ENCODE measurements at regions of chr19 and their contacts with region 1.

Region 1: DNA sequence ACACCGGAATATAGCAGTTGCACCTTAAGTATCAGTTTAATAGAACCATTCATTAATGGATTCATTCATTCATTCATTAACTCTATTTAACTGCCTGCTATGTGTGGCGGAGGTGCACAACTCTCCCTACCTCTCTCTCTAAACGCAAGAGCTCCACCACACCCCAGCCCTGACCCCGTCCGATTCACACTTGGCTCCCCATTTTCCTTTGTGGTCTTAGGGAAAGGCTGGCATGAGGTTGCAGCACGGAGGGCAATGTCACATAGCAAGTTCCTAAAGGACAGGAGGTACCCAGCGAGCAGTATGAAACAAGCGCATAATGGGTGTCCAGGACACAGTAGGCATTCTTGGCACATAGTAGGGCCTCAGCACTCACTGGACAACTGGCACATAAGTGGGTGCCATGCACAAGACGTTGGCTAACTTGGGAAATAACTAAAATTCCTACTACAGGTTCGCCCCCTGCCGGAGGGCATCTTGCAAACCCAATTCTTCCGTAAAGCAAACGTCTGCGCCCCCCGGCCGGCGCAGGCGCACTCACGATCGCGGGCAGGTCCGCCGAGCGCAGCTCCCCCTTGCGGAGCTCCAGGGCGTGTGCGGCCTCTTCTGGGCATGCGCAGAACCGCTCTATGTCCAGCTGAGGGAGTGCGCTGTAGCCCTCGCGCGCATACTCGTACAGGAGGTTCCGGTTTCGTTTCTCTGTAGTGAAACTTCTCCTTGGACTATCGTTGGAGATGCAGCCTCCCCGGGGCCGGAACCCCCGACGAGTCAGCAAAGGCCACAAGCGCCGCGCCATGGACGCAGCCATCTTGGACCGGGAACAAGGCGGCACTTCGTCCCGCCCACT is at the start of gene SARS2:
- DNase-seq: peak; percentile 94
- H3K4me3 Mint-ChIP-seq: peak within 1 kb of the TSS; percentile 93
- H3K27ac Mint-ChIP-seq: peak within 1 kb of the TSS; percentile 92
- H3K4me1 Mint-ChIP-seq: peaks cover 55% of the 10 kb centered on the region
- H3K27me3 Mint-ChIP-seq: no peaks in the 10 kb centered on the region
- total RNA-seq, gene SARS2: 28.4 to 32.7 TPM

Region 2: DNA sequence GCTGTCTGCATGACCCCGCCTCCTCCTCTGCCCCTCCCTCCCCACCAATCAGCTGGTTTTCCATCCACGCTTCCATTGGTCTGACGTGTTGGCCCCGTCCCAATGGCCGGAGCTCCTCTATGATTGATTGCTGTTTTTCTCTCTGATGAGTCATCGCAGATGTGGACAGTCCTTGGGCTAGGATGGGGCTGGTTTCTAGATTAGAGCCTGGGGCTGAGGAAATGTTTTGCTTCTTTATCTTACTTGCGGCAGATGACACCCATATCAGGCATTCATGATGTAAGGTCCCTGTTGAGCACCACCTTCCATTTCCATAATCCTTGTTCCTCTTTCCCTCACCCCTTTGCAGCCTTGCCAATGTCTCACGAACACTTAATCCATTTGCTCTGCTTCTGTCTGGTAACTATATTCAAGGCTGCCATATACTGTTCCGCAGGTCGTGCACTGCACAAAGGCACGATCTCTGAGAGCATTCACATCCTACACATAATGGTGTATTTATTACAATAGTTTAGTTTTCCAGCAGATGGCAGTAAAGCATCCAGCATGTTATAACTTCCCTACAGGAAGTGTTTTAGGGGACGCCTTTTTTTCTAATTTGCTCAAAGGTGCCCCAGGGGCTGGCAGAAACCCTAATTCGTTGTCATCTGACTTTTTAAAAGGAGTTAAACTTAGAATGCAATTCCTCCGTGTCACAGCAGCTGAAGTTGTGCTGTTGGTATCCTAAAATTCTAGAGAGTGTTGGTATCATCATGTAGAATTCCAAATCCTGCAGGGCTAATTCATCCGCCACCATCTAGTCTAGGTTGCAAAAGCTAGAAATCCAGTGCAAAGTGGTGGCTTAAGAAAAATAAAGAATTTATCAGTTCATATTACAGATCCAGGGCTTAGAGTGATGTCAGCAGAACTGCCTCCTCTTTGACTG is 385.9 kb before region 1 on chr19:
- CTCF ChIA-PET with region 1: interaction called, 12 read pairs
- POLR2A ChIA-PET with region 1: no interaction called
- DNase-seq: peak; percentile 49
- H3K4me3 Mint-ChIP-seq: peak overlapping the region; percentile 50
- H3K27ac Mint-ChIP-seq: peak overlapping the region; percentile 75
- H3K4me1 Mint-ChIP-seq: peaks cover 38% of the 10 kb centered on the region
- H3K27me3 Mint-ChIP-seq: no peaks in the 10 kb centered on the region

Region 3: DNA sequence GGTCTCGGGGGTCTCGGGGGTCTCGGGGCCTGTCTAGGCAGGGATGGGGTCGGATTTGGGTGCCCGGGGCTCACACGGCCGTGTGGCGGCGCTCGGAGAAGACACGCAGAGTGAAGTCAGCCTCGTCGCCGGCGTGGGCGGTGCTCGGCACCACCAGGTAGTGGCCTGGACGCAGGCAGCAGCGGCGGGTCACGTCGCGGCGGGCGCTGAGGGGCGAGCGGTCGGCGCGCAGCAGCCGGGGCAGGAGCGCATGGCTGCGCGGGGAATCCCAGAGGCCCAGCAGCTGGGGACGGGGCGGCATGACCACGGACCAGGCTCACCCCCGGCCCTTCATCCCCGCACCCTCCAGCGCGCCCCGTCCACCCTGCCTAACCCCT is 194.1 kb before region 1 on chr19:
- CTCF ChIA-PET with region 1: interaction called, 24 read pairs
- POLR2A ChIA-PET with region 1: interaction called, 4 read pairs
- DNase-seq: peak; percentile 65
- H3K4me3 Mint-ChIP-seq: peak overlapping the region; percentile 63
- H3K27ac Mint-ChIP-seq: no peak overlapping the region
- H3K4me1 Mint-ChIP-seq: peaks cover 62% of the 10 kb centered on the region
- H3K27me3 Mint-ChIP-seq: peaks cover 4% of the 10 kb centered on the region

Region 4: GRCh38 chr19:38849860-38850435 is 80.2 kb before region 1 on chr19 and contains the start of gene HNRNPL:
- CTCF ChIA-PET with region 1: interaction called, 12 read pairs
- POLR2A ChIA-PET with region 1: interaction called, 11 read pairs
- DNase-seq: peak; percentile 99
- H3K4me3 Mint-ChIP-seq: peak within 1 kb of the TSS; percentile 92
- H3K27ac Mint-ChIP-seq: peak within 1 kb of the TSS; percentile 99
- H3K4me1 Mint-ChIP-seq: peaks cover 58% of the 10 kb centered on the region
- H3K27me3 Mint-ChIP-seq: no peaks in the 10 kb centered on the region
- total RNA-seq, gene HNRNPL: 457 to 464 TPM

Region 5: DNA sequence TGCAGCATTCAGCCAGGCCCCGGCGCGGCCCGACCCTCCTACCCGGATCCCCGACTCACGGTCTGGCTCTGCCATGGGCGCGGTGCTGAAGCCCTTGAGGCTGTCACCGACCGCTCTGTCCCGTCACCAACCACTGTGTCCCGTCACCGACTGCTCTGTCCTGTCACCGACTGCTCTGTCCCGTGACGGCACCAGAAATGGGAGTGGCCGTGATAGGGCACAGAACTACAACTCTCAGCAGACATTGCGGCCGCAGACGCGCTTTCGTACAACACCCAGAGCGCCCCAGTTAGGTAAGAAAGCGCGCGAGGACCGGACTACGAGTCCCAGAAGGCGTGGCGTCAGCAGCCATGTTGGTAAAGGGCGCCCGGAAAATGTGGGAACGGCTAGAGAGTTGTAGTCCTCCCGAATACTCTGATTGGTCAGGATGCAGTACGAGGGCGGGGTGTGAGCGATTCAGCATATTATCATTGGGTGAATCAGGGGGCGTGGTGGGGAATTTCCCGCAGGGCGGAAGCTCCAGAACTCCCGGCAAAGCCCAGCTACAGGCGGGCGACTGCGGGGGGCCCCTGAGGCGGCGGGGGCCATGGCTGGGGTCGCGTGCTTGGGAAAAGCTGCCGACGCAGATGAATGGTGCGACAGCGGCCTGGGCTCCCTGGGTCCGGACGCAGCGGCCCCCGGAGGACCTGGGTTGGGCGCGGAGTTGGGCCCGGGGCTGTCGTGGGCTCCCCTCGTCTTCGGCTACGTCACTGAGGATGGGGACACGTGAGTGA is 30.5 kb before region 1 on chr19 and contains the starts of genes NFKBIB and SIRT2:
- CTCF ChIA-PET with region 1: interaction called, 62 read pairs
- POLR2A ChIA-PET with region 1: interaction called, 22 read pairs
- DNase-seq: peak; percentile 100
- H3K4me3 Mint-ChIP-seq: peak within 1 kb of the TSS; percentile 98
- H3K27ac Mint-ChIP-seq: peak within 1 kb of the TSS; percentile 89
- H3K4me1 Mint-ChIP-seq: peaks cover 48% of the 10 kb centered on the region
- H3K27me3 Mint-ChIP-seq: no peaks in the 10 kb centered on the region
- total RNA-seq, gene NFKBIB: 40.2 to 40.8 TPM
- total RNA-seq, gene SIRT2: 51.4 to 53.2 TPM

Measured in activated CD4-positive, alpha-beta memory T cell treated with anti-CD3 and anti-CD28 coated beads, Interleukin-2, amount 10 ng/mL, durations not matched to agents 7 days and 5 days (primary cell).